ENCODE measurements at regions of chr3 and their contacts with region 1.

Region 1: DNA sequence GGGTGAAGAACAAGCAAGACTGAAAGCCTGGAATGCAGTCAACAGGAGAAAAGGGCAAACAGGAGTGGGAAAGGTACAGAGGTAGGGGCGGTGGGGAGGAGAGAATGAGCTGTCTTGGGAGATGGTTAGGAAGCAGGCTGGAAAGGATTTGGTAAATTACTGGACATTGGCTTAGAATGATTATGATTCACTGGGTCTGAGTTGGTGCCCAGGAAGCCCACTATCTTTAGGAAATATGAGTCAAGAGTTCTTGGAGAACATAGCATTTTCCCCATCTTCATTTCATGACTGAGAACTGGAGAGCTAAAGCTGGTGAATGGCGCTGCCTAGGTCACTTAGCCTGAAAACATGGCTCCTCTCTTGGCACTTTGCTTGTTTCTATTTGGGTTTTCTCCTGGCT is 74.7 kb upstream of the C3orf80 start:
- DNase-seq: no peak
- H3K4me3 ChIP-seq: no peak overlapping the region
- H3K4me3 Mint-ChIP-seq: no peak overlapping the region
- H3K27ac ChIP-seq: no peak overlapping the region
- H3K27ac Mint-ChIP-seq: no peak overlapping the region
- H3K4me1 ChIP-seq: no peaks in the 10 kb centered on the region
- H3K4me1 Mint-ChIP-seq: peaks cover 2% of the 10 kb centered on the region
- H3K27me3 ChIP-seq: no peaks in the 10 kb centered on the region
- H3K27me3 Mint-ChIP-seq: peaks cover 0 to 3% (median 2%) of the 10 kb centered on the region in 3 donors
- CTCF ChIP-seq: no peak

Region 2: DNA sequence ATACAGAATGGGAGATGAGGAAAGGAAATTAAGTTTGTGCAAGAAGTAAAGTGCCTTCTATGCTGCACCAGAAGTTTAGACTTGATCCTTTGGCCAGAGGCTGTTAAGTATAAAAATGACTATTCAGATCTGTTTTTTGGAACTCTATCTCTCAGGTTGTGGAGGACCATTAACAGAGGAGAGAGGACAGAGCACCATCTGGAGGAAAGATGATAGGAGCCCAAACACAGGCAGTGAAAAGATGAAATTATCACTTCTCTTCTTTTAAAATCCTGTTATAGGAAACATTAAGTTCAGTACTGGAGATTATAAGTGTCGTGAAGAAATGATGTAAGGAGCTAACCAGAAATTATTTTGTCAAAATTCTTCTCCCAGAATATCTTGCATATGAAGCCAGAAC is 646.6 kb before region 1 on chr3:
- intact Hi-C with region 1: no loop called
- DNase-seq: no peak
- H3K4me3 ChIP-seq: no peak overlapping the region
- H3K4me3 Mint-ChIP-seq: no peak overlapping the region
- H3K27ac ChIP-seq: no peak overlapping the region
- H3K27ac Mint-ChIP-seq: no peak overlapping the region
- H3K4me1 ChIP-seq: no peaks in the 10 kb centered on the region
- H3K4me1 Mint-ChIP-seq: no peaks in the 10 kb centered on the region
- H3K27me3 ChIP-seq: no peaks in the 10 kb centered on the region
- H3K27me3 Mint-ChIP-seq: peaks cover 2 to 3% (median 2%) of the 10 kb centered on the region in 3 donors
- CTCF ChIP-seq: no peak

Region 3: GRCh38 chr3:159950156-159950898 is 200.2 kb before region 1 on chr3:
- intact Hi-C with region 1: no loop called
- DNase-seq: peak in 2 of 3 donors; percentile 34 to 37
- H3K4me3 ChIP-seq: peak overlapping the region in 1 of 3 experiments; percentile 3
- H3K4me3 Mint-ChIP-seq: peak overlapping the region; percentile 16 to 49
- H3K27ac ChIP-seq: no peak overlapping the region
- H3K27ac Mint-ChIP-seq: peak overlapping the region in 1 of 7 donors; percentile 45
- H3K4me1 ChIP-seq: peaks cover 82 to 86% of the 10 kb centered on the region in 2 donors
- H3K4me1 Mint-ChIP-seq: peaks cover 79% of the 10 kb centered on the region
- H3K27me3 ChIP-seq: no peaks in the 10 kb centered on the region
- H3K27me3 Mint-ChIP-seq: peaks cover 0 to 2% (median 0%) of the 10 kb centered on the region in 3 donors
- CTCF ChIP-seq: no peak

Region 4: GRCh38 chr3:160003520-160004128 is 146.9 kb before region 1 on chr3:
- intact Hi-C with region 1: no loop called
- DNase-seq: peak; percentile 36 to 62 (median 47)
- H3K4me3 ChIP-seq: no peak overlapping the region
- H3K4me3 Mint-ChIP-seq: no peak overlapping the region
- H3K27ac ChIP-seq: no peak overlapping the region
- H3K27ac Mint-ChIP-seq: peak overlapping the region in 1 of 7 donors; percentile 50
- H3K4me1 ChIP-seq: peaks cover 2 to 4% of the 10 kb centered on the region in 2 donors
- H3K4me1 Mint-ChIP-seq: peaks cover 14% of the 10 kb centered on the region
- H3K27me3 ChIP-seq: no peaks in the 10 kb centered on the region
- H3K27me3 Mint-ChIP-seq: peaks cover 0 to 4% (median 0%) of the 10 kb centered on the region in 3 donors
- CTCF ChIP-seq: peak; percentile 68

Region 5: GRCh38 chr3:160099834-160100233 is 50.7 kb before region 1 on chr3:
- intact Hi-C with region 1: loop called in 1 of 2 experiments (anchors 10 kb)
- DNase-seq: peak in 2 of 3 donors; percentile 25 to 43
- H3K4me3 ChIP-seq: no peak overlapping the region
- H3K4me3 Mint-ChIP-seq: peak overlapping the region in 1 of 2 donors; percentile 61
- H3K27ac ChIP-seq: no peak overlapping the region
- H3K27ac Mint-ChIP-seq: peak overlapping the region in 6 of 7 donors; percentile 12 to 49 (median 26)
- H3K4me1 ChIP-seq: peaks cover 6 to 13% of the 10 kb centered on the region in 2 donors
- H3K4me1 Mint-ChIP-seq: peaks cover 12% of the 10 kb centered on the region
- H3K27me3 ChIP-seq: no peaks in the 10 kb centered on the region
- H3K27me3 Mint-ChIP-seq: peaks cover 0 to 1% (median 0%) of the 10 kb centered on the region in 3 donors
- CTCF ChIP-seq: no peak

Region 6: GRCh38 chr3:160473978-160474377 is 323.5 kb after region 1 on chr3:
- intact Hi-C with region 1: no loop called
- DNase-seq: no peak
- H3K4me3 ChIP-seq: no peak overlapping the region
- H3K4me3 Mint-ChIP-seq: no peak overlapping the region
- H3K27ac ChIP-seq: no peak overlapping the region
- H3K27ac Mint-ChIP-seq: no peak overlapping the region
- H3K4me1 ChIP-seq: peaks cover 6 to 10% of the 10 kb centered on the region in 2 donors
- H3K4me1 Mint-ChIP-seq: peaks cover 22% of the 10 kb centered on the region
- H3K27me3 ChIP-seq: no peaks in the 10 kb centered on the region
- H3K27me3 Mint-ChIP-seq: peaks cover 0 to 1% (median 0%) of the 10 kb centered on the region in 3 donors
- CTCF ChIP-seq: no peak

Measured in CD14-positive monocyte (primary cell).